ENCODE measurements at regions of chr7 and their contacts with region 1.

Region 1: GRCh38 chr7:152145853-152146466 is 120.5 kb downstream of the GALNT11 start:
- DNase-seq: peak; percentile 95
- H3K4me3 ChIP-seq: no peak overlapping the region
- H3K27ac ChIP-seq: peak overlapping the region; percentile 40
- H3K4me1 ChIP-seq: peaks cover 25% of the 10 kb centered on the region
- H3K27me3 ChIP-seq: no peaks in the 10 kb centered on the region
- CTCF ChIP-seq: peak; percentile 61 to 75
- POLR2A ChIP-seq: no peak

Region 2: GRCh38 chr7:151368136-151368571 is 777.8 kb before region 1 on chr7:
- CTCF ChIA-PET with region 1: no interaction called
- POLR2A ChIA-PET with region 1: no interaction called
- dilution Hi-C with region 1: no loop called
- intact Hi-C with region 1: loop called (anchors 5 kb)
- DNase-seq: peak; percentile 71
- H3K4me3 ChIP-seq: no peak overlapping the region
- H3K27ac ChIP-seq: no peak overlapping the region
- H3K4me1 ChIP-seq: no peaks in the 10 kb centered on the region
- H3K27me3 ChIP-seq: no peaks in the 10 kb centered on the region
- CTCF ChIP-seq: peak; percentile 97 to 99
- POLR2A ChIP-seq: no peak

Region 3: DNA sequence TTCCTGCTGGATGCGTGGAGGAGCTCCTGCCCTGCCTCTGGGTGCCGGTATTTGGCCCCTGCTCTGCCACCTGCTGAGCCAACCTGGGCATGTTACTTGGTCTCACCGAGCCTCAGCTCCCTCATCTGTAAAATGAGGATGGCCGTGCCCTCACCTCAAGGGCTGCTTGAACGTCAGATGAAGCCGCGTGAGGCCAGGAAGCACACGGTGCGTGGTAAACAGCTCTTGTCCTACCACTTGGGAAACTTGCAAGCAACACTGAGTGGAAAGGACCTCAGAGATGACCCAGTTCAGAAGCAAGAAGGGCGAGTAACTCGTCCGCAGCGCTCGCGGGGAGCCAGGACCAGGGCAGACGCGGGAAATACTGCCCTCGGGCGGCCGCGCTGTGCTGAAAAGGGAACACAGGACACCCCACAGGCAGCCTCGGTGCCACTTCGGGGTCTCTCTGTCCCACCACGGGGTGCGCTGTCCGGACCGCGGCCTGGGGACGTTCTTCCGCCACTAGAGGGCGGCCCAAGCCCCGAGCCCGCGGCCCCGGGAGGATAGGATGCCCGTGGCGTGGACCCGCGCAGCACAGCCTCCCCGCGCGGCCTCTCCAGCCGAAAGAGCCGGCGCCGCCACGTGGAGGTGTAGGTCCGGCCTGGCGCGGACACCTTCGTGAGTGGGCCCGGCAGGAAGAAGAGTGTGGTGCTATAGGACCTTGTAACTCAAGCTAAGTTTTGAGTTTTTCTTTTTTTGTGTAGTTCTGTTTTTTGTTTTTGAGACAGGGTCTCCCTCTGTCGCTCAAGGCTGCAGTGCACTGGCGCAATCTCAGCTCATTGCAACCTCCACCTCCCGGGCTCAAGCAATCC is 363.1 kb before region 1 on chr7:
- CTCF ChIA-PET with region 1: interaction called, 23 read pairs
- POLR2A ChIA-PET with region 1: no interaction called
- dilution Hi-C with region 1: no loop called
- intact Hi-C with region 1: loop called (anchors 1 kb)
- DNase-seq: peak; percentile 59
- H3K4me3 ChIP-seq: peak overlapping the region in 1 of 3 experiments; percentile 22
- H3K27ac ChIP-seq: no peak overlapping the region
- H3K4me1 ChIP-seq: peaks cover 4% of the 10 kb centered on the region
- H3K27me3 ChIP-seq: peaks cover 5 to 7% of the 10 kb centered on the region in 2 experiments
- CTCF ChIP-seq: peak; percentile 94 to 97
- POLR2A ChIP-seq: no peak

Region 4: DNA sequence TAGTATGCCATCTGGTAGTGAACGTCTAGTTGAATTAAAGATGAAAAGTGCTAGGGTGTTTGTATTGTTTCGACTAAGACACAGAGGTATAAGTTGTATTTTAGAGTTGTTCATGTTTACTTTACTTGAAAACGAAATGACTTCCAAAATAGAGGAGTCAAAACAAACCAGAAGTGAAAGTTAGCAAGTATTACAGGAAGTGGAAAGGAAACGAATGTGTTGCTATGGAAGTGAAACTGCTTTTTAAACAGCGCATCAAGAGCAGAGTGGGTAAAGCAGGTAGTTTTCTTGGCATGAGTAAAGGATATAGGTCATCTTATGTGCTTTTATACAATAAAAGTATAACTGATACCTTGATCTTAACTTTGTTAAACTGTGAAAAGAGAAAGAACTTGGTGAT is 209.8 kb before region 1 on chr7:
- CTCF ChIA-PET with region 1: no interaction called
- POLR2A ChIA-PET with region 1: no interaction called
- dilution Hi-C with region 1: no loop called
- intact Hi-C with region 1: loop called (anchors 10 kb)
- DNase-seq: peak; percentile 17
- H3K4me3 ChIP-seq: no peak overlapping the region
- H3K27ac ChIP-seq: no peak overlapping the region
- H3K4me1 ChIP-seq: peaks cover 4% of the 10 kb centered on the region
- H3K27me3 ChIP-seq: peaks cover 8 to 10% of the 10 kb centered on the region in 2 experiments
- CTCF ChIP-seq: no peak
- POLR2A ChIP-seq: no peak

Region 5: DNA sequence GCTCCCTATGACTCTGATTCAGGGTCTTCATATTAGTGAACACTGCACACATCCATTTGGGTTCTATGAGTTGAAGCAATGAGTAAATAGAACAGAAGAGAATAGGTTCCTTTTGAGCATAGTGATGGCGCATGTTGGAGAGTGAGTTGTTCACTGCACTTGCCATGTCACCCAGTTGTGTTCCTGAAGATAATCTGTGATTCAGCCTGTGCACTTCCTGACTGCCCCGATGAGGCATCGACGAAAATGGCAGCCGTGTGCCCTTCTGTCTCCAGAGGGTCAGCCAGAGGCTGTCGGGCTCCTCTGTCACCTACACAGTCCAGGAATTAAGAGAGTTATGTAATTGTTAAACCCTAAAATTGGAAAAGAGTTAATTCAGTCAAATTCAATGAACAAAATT is 25.8 kb before region 1 on chr7:
- CTCF ChIA-PET with region 1: interaction called, 3 read pairs
- POLR2A ChIA-PET with region 1: no interaction called
- dilution Hi-C with region 1: no loop called
- intact Hi-C with region 1: loop called (anchors 1 kb)
- DNase-seq: peak; percentile 77
- H3K4me3 ChIP-seq: no peak overlapping the region
- H3K27ac ChIP-seq: peak overlapping the region; percentile 25
- H3K4me1 ChIP-seq: peaks cover 12% of the 10 kb centered on the region
- H3K27me3 ChIP-seq: no peaks in the 10 kb centered on the region
- CTCF ChIP-seq: no peak
- POLR2A ChIP-seq: no peak

Region 6: DNA sequence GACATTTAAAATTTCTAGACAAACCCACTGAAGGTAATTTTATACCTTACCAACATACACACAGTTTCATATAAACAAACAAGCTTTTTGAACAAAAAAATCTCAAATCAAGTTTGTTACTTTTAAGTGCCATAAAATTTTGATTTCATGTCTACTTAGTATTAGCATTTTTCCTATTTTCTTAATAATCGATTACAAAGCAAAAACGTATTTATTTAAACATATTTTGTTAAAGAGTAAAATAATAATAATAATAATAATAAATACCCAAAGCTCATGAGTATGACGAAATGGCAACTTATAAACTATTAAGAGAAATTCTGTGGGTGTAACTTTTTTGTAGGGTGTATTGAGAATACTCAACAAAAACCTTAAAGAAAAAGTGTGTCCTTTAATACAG is 57.1 kb after region 1 on chr7:
- CTCF ChIA-PET with region 1: no interaction called
- POLR2A ChIA-PET with region 1: no interaction called
- dilution Hi-C with region 1: no loop called
- intact Hi-C with region 1: no loop called
- DNase-seq: no peak
- H3K4me3 ChIP-seq: no peak overlapping the region
- H3K27ac ChIP-seq: peak overlapping the region; percentile 61
- H3K4me1 ChIP-seq: peaks cover 25% of the 10 kb centered on the region
- H3K27me3 ChIP-seq: no peaks in the 10 kb centered on the region
- CTCF ChIP-seq: no peak
- POLR2A ChIP-seq: no peak

Region 7: GRCh38 chr7:152485814-152486213 is 339.9 kb after region 1 on chr7:
- CTCF ChIA-PET with region 1: no interaction called
- POLR2A ChIA-PET with region 1: interaction called, 10 read pairs
- dilution Hi-C with region 1: no loop called
- intact Hi-C with region 1: no loop called
- DNase-seq: no peak
- H3K4me3 ChIP-seq: no peak overlapping the region
- H3K27ac ChIP-seq: no peak overlapping the region
- H3K4me1 ChIP-seq: no peaks in the 10 kb centered on the region
- H3K27me3 ChIP-seq: no peaks in the 10 kb centered on the region
- CTCF ChIP-seq: no peak
- POLR2A ChIP-seq: no peak